ENCODE measurements at regions of chr20 and their contacts with region 1.

Region 1: DNA sequence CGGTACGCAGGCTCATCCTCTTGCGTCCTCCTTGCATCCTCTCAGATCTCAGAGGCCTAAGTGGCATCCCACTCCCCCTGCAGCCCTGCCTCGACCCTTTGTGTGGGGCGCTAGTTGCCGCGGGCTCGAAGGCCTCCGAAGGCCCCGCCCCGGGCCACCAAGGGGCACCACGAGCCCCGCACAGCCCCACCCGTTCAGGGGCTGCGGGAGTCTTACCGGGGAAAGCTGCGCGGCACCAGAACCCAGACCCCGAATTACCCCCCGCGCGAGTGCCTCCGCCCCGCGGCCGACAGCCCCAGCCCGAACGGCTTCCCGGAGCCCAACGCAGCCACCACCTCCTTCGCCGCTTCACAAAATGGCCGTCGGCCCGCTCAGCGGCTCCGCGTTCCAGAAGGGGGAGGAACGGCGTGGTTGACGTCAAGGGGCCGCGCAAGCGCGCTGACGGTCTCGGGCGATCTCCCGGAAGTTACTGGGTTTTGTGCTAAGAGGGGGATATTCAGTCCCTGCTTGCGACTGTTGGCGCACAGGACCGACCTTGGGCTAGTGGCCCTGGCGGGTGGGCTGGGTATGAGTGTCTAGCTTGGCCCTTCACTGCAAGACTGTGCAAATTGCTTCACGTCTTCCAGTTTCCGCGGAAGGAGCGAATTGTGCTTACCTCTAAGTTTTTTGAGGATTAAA is at the starts of genes CPNE1 and RBM12:
- DNase-seq: peak; percentile 92 to 94
- ATAC-seq: peak; percentile 96 to 98 (median 97)
- H3K4me3 ChIP-seq: peak within 1 kb of the TSS; percentile 68 to 96 (median 79)
- H3K27ac ChIP-seq: peak within 1 kb of the TSS; percentile 90 to 100 (median 97)
- H3K4me1 ChIP-seq: peaks cover 3 to 45% (median 38%) of the 10 kb centered on the region in 9 donors
- H3K27me3 ChIP-seq: no peaks in the 10 kb centered on the region
- CTCF ChIP-seq: no peak
- total RNA-seq, gene CPNE1: 25.8 to 83.2 (median 53.7) TPM
- total RNA-seq, gene RBM12: 44.6 to 63.0 (median 52.2) TPM

Region 2: GRCh38 chr20:35463455-35464300 is 201.0 kb before region 1 on chr20:
- intact Hi-C with region 1: loop called in 1 of 10 experiments (anchors 10 kb)
- DNase-seq: peak in 1 of 2 donors; percentile 63
- ATAC-seq: peak; percentile 64 to 81 (median 72)
- H3K4me3 ChIP-seq: no peak overlapping the region
- H3K27ac ChIP-seq: no peak overlapping the region
- H3K4me1 ChIP-seq: no peaks in the 10 kb centered on the region
- H3K27me3 ChIP-seq: no peaks in the 10 kb centered on the region
- CTCF ChIP-seq: peak; percentile 57 to 85 (median 81)

Region 3: GRCh38 chr20:35541783-35542588 is 122.7 kb before region 1 on chr20 and contains the start of gene ERGIC3:
- intact Hi-C with region 1: loop called in 2 of 10 experiments (anchors 5 to 10 kb)
- DNase-seq: peak; percentile 98
- ATAC-seq: peak; percentile 99 to 100 (median 100)
- H3K4me3 ChIP-seq: peak within 1 kb of the TSS; percentile 71 to 95 (median 85)
- H3K27ac ChIP-seq: peak within 1 kb of the TSS in 9 of 10 donors; percentile 59 to 89 (median 76)
- H3K4me1 ChIP-seq: peaks cover 0 to 23% (median 15%) of the 10 kb centered on the region in 9 donors
- H3K27me3 ChIP-seq: no peaks in the 10 kb centered on the region
- CTCF ChIP-seq: peak in 4 of 9 donors; percentile 7 to 26 (median 21)
- total RNA-seq, gene ERGIC3: 40.9 to 143 (median 102) TPM

Region 4: GRCh38 chr20:35619196-35620095 is 45.2 kb before region 1 on chr20:
- intact Hi-C with region 1: loop called in 8 of 10 experiments (anchors 2 to 10 kb)
- DNase-seq: peak; percentile 79 to 83
- ATAC-seq: peak in 7 of 8 donors; percentile 10 to 48 (median 25)
- H3K4me3 ChIP-seq: peak overlapping the region; percentile 23 to 80 (median 54)
- H3K27ac ChIP-seq: peak overlapping the region in 4 of 10 donors; percentile 19 to 94 (median 46)
- H3K4me1 ChIP-seq: peaks cover 19 to 44% (median 36%) of the 10 kb centered on the region in 9 donors
- H3K27me3 ChIP-seq: peaks cover 0 to 7% (median 0%) of the 10 kb centered on the region in 7 donors
- CTCF ChIP-seq: peak in 4 of 9 donors; percentile 35 to 45 (median 40)

Region 5: GRCh38 chr20:37501940-37502339 is 1837.3 kb after region 1 on chr20:
- intact Hi-C with region 1: no loop called
- DNase-seq: no peak
- ATAC-seq: no peak
- H3K4me3 ChIP-seq: no peak overlapping the region
- H3K27ac ChIP-seq: no peak overlapping the region
- H3K4me1 ChIP-seq: peaks cover 0 to 40% (median 19%) of the 10 kb centered on the region in 9 donors
- H3K27me3 ChIP-seq: no peaks in the 10 kb centered on the region
- CTCF ChIP-seq: no peak

Measured in heart right ventricle (tissue), 16 donors.